PC-3 (cell line): ENCODE measurements at regions of chr5 and their contacts with region 1.

Region 1: DNA sequence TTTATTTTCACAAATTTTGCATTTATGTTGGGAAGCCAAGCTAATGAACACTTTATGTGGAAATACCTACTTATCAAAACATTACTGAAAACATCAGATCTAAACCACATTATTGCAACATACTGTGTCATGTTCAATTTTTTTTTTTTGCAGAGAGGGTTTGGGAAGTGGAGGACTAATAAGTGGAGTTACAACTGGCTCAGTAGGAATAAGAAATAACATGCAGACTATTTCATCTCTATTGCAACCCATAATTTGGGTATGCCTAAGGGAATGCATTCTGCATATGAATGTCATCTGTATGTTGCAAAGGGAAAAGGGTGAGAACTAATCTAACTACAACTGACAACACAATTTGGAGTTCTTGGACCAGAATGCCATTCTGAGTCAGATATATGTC is 41.8 kb downstream of the APC start:
- DNase-seq: peak; percentile 40
- ATAC-seq: peak; percentile 74
- H3K4me3 ChIP-seq: no peak overlapping the region
- H3K27ac ChIP-seq: no peak overlapping the region
- H3K4me1 ChIP-seq: peaks cover 5% of the 10 kb centered on the region; the same call in 1 of the 2 replicates
- H3K27me3 ChIP-seq: no peaks in the 10 kb centered on the region
- CTCF ChIP-seq: no peak

Region 2: DNA sequence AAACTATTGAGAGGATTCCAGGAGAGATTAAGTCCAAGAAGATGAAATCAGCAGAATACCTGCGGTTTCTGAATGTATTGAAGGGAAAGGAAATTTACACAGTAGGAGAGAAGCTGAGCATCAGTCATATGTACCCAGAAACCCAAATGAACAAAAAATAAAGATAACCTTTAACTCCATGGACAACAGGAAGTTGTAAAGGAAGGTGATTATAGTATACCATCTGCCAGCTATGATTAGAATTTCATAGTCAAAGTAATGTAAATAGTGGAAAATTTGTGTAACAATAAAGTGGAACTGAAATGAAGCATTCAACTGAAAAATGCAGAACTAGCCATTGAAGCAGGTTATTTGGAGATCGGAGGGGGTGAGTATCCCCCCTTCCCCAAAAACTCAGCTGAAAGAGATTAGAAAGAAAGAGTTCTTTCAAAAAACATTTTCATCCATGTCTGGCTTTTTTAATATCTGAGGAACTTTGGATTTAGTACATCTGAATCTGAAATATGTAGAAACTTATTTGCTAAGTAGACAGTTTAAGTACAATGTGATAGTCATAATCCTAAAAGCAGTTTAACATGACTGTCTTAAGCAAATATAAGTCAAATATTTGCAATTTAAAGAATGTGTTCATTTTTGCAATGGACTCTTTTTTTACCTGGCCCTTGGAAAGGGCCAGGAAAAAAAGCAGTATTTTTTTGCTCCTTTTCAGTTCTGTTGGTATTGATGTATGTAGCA is 16.6 kb after region 1 on chr5:
- CTCF ChIA-PET with region 1: no interaction called
- POLR2A ChIA-PET with region 1: no interaction called
- intact Hi-C with region 1: no loop called
- DNase-seq: peak; percentile 21
- ATAC-seq: peak; percentile 72
- H3K4me3 ChIP-seq: no peak overlapping the region
- H3K27ac ChIP-seq: no peak overlapping the region
- H3K4me1 ChIP-seq: peaks cover 8% of the 10 kb centered on the region; the same call in 1 of the 2 replicates
- H3K27me3 ChIP-seq: no peaks in the 10 kb centered on the region
- CTCF ChIP-seq: no peak

Region 3: DNA sequence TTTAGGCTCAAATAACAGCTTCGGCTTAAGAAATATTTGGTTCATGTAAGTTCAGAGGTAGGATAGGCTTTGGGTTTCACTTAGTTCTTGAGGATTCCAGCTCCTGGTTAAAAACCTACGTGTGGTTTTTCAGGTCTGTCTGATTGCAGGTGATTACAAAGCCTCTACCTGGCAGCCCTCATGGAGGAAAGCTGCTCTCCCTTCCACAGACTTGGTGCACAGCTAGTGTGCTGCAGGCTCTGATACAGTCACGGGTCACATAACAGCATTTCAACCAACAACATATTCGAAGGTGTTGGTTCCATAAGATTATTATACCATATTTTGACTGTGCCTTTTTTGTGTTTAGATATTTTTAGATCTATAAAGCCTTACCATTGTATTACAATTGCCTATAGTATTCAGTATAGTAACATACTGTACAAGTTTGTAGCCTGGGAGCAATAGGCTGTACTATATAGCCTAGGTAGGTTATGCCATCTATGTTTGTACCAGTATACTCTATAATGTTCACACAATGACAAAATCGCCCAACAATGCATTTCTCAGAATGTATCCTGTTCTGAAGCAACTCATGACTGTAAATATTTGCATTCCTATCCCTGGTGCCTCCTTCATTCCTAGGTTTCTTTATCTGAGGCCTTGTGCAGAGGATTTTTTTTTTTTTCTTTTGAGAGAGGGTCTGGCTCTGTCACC is 189.0 kb after region 1 on chr5:
- CTCF ChIA-PET with region 1: no interaction called
- POLR2A ChIA-PET with region 1: no interaction called
- intact Hi-C with region 1: loop called (anchors 10 kb)
- DNase-seq: peak; percentile 81
- ATAC-seq: peak; percentile 87
- H3K4me3 ChIP-seq: no peak overlapping the region
- H3K27ac ChIP-seq: 0 out of 2 replicates have a peak overlapping the region, but pooled peaks have one; percentile 18
- H3K4me1 ChIP-seq: peaks cover 24% of the 10 kb centered on the region
- H3K27me3 ChIP-seq: no peaks in the 10 kb centered on the region
- CTCF ChIP-seq: no peak